Colonic mucosa (tissue), 4 donors: ENCODE measurements at regions of chr5 and their contacts with region 1.

Region 1: GRCh38 chr5:55187370-55187769 is 14.4 kb upstream of the CDC20B start:
- DNase-seq: no peak
- H3K4me3 ChIP-seq: no peak overlapping the region
- H3K27ac ChIP-seq: no peak overlapping the region
- H3K4me1 ChIP-seq: no peaks in the 10 kb centered on the region
- H3K27me3 ChIP-seq: peaks cover 7% of the 10 kb centered on the region
- CTCF ChIP-seq: peak; percentile 28

Region 2: DNA sequence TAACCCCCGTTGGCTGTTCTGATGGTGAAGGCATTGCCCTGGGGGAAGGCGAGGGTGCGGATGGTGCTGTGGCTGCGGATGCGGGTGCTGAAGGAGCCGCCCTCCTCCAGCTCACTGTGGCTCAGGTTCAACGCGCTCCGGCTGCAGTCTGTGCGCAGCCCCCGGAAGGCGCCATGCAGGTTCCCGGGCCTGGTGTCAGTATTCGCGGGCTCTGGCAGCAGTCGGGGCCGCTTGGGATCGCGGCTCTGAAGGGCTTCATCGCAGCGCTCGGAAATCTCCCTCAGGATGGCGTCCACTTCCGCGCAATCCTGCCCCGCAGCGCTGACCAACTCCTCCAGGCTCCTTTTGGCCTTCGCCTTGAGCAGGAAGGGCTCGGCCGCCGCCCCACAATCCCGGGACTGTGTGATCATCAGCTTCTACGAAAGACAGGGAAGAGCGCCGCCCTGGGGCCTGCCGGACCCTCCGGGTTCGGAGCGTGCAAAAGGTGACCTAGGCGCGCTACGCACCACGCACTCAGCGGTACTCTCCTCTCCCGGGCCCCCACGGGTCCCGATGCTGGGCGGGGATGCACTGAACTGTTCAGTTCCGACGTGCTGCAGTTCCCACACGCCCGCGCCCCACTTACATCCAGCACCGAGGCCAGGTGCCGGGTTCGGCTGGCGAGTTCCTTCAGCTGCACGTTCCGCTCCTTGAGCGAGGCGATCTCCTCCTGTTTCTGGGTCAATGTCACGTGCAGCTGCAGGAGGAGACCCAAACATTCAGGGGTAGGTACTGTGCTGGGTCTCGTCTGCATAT is 33.2 kb after region 1 on chr5:
- intact Hi-C with region 1: loop called (anchors 5 kb)
- DNase-seq: peak; percentile 65
- H3K4me3 ChIP-seq: peak overlapping the region; percentile 36
- H3K27ac ChIP-seq: no peak overlapping the region
- H3K4me1 ChIP-seq: peaks cover 8% of the 10 kb centered on the region
- H3K27me3 ChIP-seq: peaks cover 56% of the 10 kb centered on the region
- CTCF ChIP-seq: no peak